Esophagus muscularis mucosa (tissue), 4 donors: ENCODE measurements at regions of chr16 and their contacts with region 1.

Region 1: GRCh38 chr16:78503602-78504001 is 404.1 kb downstream of the WWOX start:
- DNase-seq: no peak
- H3K4me3 ChIP-seq: no peak overlapping the region
- H3K27ac ChIP-seq: no peak overlapping the region
- H3K4me1 ChIP-seq: peaks cover 13 to 33% (median 29%) of the 10 kb centered on the region in 4 donors
- H3K27me3 ChIP-seq: no peaks in the 10 kb centered on the region
- CTCF ChIP-seq: peak; percentile 81 to 92 (median 84)
- EP300 ChIP-seq: no peak
- POLR2A ChIP-seq: no peak

Region 2: DNA sequence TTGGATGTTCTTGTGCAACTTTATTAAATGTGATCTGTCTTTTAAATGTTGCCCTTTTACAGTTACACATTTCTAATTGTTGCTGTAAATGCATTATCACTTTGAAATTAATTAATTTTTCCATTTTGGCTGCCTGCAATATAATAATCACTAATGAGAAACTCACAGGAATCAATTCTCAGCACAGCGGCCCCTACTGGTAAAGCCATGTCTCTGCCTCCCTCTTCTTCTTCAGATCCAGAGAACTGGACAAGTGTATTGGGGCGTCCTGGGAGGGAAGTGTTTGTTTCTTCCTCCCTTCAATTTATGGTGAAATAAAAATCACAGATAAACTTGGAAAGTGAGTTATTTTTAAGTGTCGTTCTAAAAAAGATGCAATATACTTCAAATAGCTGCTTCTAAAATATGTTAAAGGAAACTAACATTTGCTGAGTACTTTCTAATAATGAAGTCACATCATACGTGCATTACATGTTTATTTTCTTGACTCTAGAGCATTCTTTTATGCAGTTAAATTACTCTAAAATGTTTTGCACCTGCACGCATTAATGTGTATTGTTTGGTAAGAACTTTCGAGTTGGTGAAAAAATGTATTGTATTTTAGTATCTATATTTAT is 66.1 kb before region 1 on chr16:
- intact Hi-C with region 1: no loop called
- DNase-seq: peak; percentile 50
- H3K4me3 ChIP-seq: no peak overlapping the region
- H3K27ac ChIP-seq: no peak overlapping the region
- H3K4me1 ChIP-seq: no peaks in the 10 kb centered on the region
- H3K27me3 ChIP-seq: no peaks in the 10 kb centered on the region
- CTCF ChIP-seq: peak; percentile 60 to 86 (median 66)
- EP300 ChIP-seq: no peak
- POLR2A ChIP-seq: no peak

Region 3: GRCh38 chr16:78648517-78648916 is 144.9 kb after region 1 on chr16:
- intact Hi-C with region 1: no loop called
- DNase-seq: no peak
- H3K4me3 ChIP-seq: no peak overlapping the region
- H3K27ac ChIP-seq: no peak overlapping the region
- H3K4me1 ChIP-seq: peaks cover 6 to 12% (median 10%) of the 10 kb centered on the region in 4 donors
- H3K27me3 ChIP-seq: no peaks in the 10 kb centered on the region
- CTCF ChIP-seq: no peak
- EP300 ChIP-seq: no peak
- POLR2A ChIP-seq: no peak

Region 4: GRCh38 chr16:78761427-78761826 is 257.8 kb after region 1 on chr16:
- intact Hi-C with region 1: loop called (anchors 5 kb)
- DNase-seq: no peak
- H3K4me3 ChIP-seq: no peak overlapping the region
- H3K27ac ChIP-seq: no peak overlapping the region
- H3K4me1 ChIP-seq: peaks cover 0 to 10% (median 1%) of the 10 kb centered on the region in 4 donors
- H3K27me3 ChIP-seq: no peaks in the 10 kb centered on the region
- CTCF ChIP-seq: no peak
- EP300 ChIP-seq: no peak
- POLR2A ChIP-seq: no peak

Region 5: DNA sequence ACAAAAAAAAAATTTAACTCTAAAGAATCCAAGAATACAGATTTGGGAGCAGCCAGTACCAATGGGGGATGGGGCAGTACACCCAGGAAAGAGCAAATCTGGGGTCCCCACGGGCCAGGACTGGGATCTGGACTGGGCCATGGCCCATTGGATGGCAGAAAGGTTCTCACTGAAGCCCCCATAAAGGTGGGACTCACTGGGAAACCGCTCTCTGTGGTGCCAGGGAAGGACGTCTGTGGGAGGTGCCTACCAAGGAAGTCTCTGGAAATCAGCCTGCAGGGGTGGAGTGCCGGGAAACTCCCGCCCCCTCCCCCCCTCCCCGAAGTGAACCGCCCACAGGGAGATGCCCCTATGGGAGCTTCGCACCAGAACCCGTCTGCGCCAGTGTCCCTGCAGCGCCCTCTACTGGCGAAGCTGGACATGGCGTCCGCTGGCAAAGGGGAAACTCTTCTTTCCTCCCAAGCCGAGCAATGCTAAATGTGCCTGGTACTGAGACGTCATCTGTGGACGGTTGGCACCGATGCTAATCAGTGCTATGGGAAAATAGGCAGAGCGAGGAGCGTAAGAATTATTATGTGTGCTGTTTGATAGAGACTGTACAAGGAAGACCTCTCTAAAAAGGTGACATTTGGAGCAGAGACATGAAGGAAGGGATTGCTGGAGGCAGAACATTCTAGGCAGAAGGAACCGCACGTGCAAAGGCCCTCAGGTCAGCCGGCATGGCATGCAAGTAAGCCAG is 266.9 kb after region 1 on chr16:
- intact Hi-C with region 1: loop called (anchors 2 kb)
- DNase-seq: no peak
- H3K4me3 ChIP-seq: no peak overlapping the region
- H3K27ac ChIP-seq: no peak overlapping the region
- H3K4me1 ChIP-seq: peaks cover 4 to 24% (median 10%) of the 10 kb centered on the region in 4 donors
- H3K27me3 ChIP-seq: no peaks in the 10 kb centered on the region
- CTCF ChIP-seq: peak; percentile 56 to 77 (median 75)
- EP300 ChIP-seq: no peak
- POLR2A ChIP-seq: no peak

Region 6: DNA sequence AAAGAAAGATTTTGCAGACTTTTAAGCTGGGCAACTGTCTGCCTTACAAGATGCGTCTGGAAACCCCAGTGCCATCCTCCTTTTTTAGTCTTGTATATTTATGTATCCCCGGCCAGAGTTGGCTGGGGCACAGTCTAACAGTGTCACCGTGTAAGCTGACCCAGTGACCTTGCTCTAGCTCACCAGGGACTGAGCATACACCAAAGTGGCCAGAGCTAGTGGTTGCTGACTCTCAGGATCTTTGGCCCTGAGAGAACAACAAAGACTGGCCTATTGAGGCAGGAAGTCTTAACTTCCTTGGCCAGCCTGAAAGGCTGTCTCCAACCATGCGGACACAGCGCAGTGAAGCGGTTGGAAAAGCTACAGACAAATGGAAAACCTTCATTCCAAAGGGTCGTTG is 341.1 kb after region 1 on chr16:
- intact Hi-C with region 1: no loop called
- DNase-seq: no peak
- H3K4me3 ChIP-seq: no peak overlapping the region
- H3K27ac ChIP-seq: no peak overlapping the region
- H3K4me1 ChIP-seq: peaks cover 19 to 27% (median 23%) of the 10 kb centered on the region in 4 donors
- H3K27me3 ChIP-seq: no peaks in the 10 kb centered on the region
- CTCF ChIP-seq: no peak
- EP300 ChIP-seq: no peak
- POLR2A ChIP-seq: no peak

Region 7: GRCh38 chr16:79601931-79602627 is 1098.5 kb after region 1 on chr16:
- intact Hi-C with region 1: loop called (anchors 2 kb)
- DNase-seq: peak; percentile 96
- H3K4me3 ChIP-seq: peak overlapping the region; percentile 60 to 80 (median 70)
- H3K27ac ChIP-seq: peak overlapping the region; percentile 78 to 88 (median 86)
- H3K4me1 ChIP-seq: peaks cover 0 to 43% (median 33%) of the 10 kb centered on the region in 4 donors
- H3K27me3 ChIP-seq: peaks cover 0 to 22% (median 0%) of the 10 kb centered on the region in 4 donors
- CTCF ChIP-seq: peak; percentile 67 to 73 (median 69)
- EP300 ChIP-seq: no peak
- POLR2A ChIP-seq: no peak

Region 8: GRCh38 chr16:80084685-80085084 is 1581.1 kb after region 1 on chr16:
- intact Hi-C with region 1: loop called (anchors 10 kb)
- DNase-seq: no peak
- H3K4me3 ChIP-seq: no peak overlapping the region
- H3K27ac ChIP-seq: no peak overlapping the region
- H3K4me1 ChIP-seq: peaks cover 0 to 7% (median 3%) of the 10 kb centered on the region in 4 donors
- H3K27me3 ChIP-seq: no peaks in the 10 kb centered on the region
- CTCF ChIP-seq: peak; percentile 44 to 62 (median 47)
- EP300 ChIP-seq: no peak
- POLR2A ChIP-seq: no peak

Region 9: DNA sequence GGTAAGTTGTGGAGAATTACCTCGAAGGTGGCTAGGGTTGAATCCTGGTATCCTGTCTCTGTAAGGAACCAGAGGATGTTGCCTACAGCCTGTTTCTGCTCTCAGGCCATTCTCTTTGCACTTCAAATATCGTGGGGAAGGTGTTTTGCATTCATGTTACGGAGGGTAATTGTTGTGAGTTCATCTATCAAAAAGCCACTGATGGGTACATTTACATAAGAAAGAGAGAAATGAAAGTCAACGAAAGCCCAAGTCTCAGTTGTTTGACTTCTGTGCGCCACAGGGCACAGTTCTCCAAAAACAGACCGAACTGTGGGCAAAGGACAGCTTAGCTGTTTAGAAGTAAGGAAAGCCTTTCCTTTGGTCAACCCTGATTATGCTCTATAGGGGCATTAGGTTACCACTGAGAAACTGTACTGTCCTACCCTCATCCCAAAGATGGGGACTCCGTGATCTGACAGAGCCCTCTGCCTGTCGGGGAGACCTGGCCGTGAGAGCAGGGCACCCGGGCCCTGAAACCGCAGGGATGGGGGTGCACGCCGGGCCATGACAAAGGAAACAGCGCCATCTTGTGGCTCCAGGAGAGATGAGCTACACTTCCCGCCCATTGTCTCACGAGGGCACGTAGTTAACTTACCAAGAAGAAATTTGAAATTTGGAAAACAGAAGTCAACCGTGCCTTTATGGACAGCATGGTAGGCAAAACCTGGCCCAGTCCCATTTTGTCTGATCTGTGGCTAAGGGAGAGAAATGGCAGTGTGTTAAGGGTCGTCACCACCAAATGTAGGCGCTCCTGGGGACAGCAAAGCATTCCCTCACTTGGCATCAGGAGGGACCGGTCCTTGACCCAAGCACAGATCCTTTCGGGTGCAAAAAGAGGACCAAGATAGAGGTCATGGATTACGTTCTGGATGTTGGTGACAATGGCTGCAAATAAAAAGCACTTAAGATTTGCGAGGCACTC is 1962.7 kb after region 1 on chr16:
- intact Hi-C with region 1: loop called (anchors 10 kb)
- DNase-seq: no peak
- H3K4me3 ChIP-seq: no peak overlapping the region
- H3K27ac ChIP-seq: no peak overlapping the region
- H3K4me1 ChIP-seq: peaks cover 0 to 4% (median 2%) of the 10 kb centered on the region in 4 donors
- H3K27me3 ChIP-seq: peaks cover 0 to 16% (median 0%) of the 10 kb centered on the region in 4 donors
- CTCF ChIP-seq: peak; percentile 36 to 55 (median 43)
- EP300 ChIP-seq: no peak
- POLR2A ChIP-seq: no peak